Breast epithelium (tissue), 4 donors: ENCODE measurements at regions of chr6 and their contacts with region 1.

Region 1: GRCh38 chr6:134882426-134883038 is 67.4 kb downstream of the ALDH8A1 start:
- DNase-seq: peak; percentile 26 to 62
- H3K4me3 ChIP-seq: no peak overlapping the region
- H3K27ac ChIP-seq: no peak overlapping the region
- H3K4me1 ChIP-seq: no peaks in the 10 kb centered on the region
- H3K27me3 ChIP-seq: no peaks in the 10 kb centered on the region
- CTCF ChIP-seq: peak; percentile 74 to 98 (median 96)
- POLR2A ChIP-seq: no peak

Region 2: GRCh38 chr6:134870677-134871498 is 11.6 kb before region 1 on chr6:
- intact Hi-C with region 1: loop called (anchors 1 kb)
- DNase-seq: no peak
- H3K4me3 ChIP-seq: no peak overlapping the region
- H3K27ac ChIP-seq: no peak overlapping the region
- H3K4me1 ChIP-seq: no peaks in the 10 kb centered on the region
- H3K27me3 ChIP-seq: no peaks in the 10 kb centered on the region
- CTCF ChIP-seq: no peak
- POLR2A ChIP-seq: no peak

Region 3: GRCh38 chr6:135180542-135181332 is 298.2 kb after region 1 on chr6 and contains the start of gene MYB:
- intact Hi-C with region 1: no loop called
- DNase-seq: peak in 1 of 2 donors; percentile 58
- H3K4me3 ChIP-seq: peak within 1 kb of the TSS; percentile 53 to 82 (median 64)
- H3K27ac ChIP-seq: peak within 1 kb of the TSS in 1 of 2 donors; percentile 83
- H3K4me1 ChIP-seq: no peaks in the 10 kb centered on the region
- H3K27me3 ChIP-seq: peaks cover 0 to 22% of the 10 kb centered on the region in 2 donors
- CTCF ChIP-seq: peak in 1 of 3 donors; percentile 13
- POLR2A ChIP-seq: no peak
- total RNA-seq, gene MYB: 1.1 to 61.9 (median 37.0) TPM